Heart right ventricle (tissue), 16 donors: ENCODE measurements at regions of chr9 and their contacts with region 1.

Region 1: GRCh38 chr9:86637515-86637914 is 283.3 kb upstream of the TUT7 start:
- DNase-seq: peak; percentile 26 to 40
- ATAC-seq: peak in 3 of 8 donors; percentile 25 to 75 (median 51)
- H3K4me3 ChIP-seq: no peak overlapping the region
- H3K27ac ChIP-seq: no peak overlapping the region
- H3K4me1 ChIP-seq: peaks cover 0 to 2% (median 0%) of the 10 kb centered on the region in 9 donors
- H3K27me3 ChIP-seq: peaks cover 0 to 13% (median 4%) of the 10 kb centered on the region in 7 donors
- CTCF ChIP-seq: peak; percentile 16 to 63 (median 50)

Region 2: DNA sequence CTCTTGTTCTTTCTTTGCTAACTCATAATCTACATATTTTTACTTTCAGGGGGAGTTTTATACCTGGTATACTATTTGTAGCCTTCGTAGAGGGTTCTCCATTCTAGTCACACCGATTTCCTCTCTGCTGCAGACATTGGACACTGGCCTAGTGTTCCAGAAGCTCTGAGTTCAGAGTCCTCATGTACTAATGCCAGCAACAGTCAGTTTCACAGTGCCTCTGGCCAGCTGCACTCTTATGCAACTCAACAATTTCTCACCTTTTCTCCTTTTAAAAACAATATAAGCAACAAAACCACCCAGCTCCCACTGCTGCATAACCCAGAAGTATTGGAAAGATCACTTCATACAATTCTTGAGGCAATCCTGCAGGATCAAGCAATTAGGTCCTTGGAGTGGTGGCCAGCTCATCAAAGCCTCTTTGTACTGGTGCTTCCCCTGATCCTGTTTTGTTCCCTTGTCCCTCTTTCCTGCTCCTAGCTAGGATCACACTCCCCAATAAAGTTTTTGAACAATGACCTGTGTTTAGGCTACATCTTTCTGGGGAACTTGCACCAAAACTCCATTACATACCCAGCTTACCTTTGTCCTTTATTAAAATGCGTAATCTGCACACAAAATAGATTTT is 185.2 kb before region 1 on chr9:
- intact Hi-C with region 1: no loop called
- DNase-seq: no peak
- ATAC-seq: peak in 1 of 8 donors; percentile 41
- H3K4me3 ChIP-seq: no peak overlapping the region
- H3K27ac ChIP-seq: no peak overlapping the region
- H3K4me1 ChIP-seq: no peaks in the 10 kb centered on the region
- H3K27me3 ChIP-seq: no peaks in the 10 kb centered on the region
- CTCF ChIP-seq: no peak

Region 3: DNA sequence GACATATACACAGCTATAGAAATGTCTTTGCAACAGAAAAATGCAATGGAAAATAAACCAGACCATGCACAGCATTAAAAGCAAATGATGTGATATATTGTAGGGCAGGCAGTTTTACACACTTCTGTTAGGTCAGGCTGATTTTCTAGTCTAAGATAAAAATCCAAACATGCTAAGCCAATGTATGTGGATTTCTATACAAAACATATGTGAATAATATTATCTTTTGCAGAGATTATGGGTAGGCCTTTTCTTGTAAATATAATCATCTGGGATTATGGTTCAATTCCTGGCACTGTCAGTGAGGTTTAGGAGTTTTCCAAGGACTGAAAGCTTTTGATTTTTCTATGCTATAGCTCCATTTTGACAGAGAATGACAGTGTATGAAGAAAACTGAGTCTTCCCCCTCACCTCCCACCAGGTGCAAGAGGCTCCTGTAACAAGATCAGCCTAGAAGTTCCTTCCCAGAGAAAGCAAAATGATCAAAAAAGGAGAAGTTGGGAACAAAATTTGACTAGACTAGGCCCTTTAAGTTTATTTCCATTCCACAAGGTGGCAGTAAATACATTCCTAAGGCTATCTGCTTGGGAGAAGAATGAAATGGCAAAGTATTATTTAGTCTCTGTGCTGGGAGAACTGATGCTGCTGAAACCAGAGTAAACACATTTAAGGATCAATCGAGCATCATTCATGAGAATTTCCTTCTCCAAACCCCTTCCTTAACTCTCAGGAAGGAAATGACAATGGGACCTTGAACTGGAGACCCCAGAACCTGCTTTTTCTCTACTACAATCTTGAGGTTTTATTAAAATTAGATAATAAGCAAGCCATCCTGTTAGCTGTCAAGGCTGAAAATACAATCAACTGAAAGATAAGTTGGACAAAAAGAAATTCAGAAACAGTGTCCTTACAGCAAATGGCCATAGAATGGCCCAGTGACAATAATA is 150.4 kb before region 1 on chr9:
- intact Hi-C with region 1: loop called in 1 of 10 experiments (anchors 10 kb)
- DNase-seq: no peak
- ATAC-seq: peak in 7 of 8 donors; percentile 55 to 80 (median 73)
- H3K4me3 ChIP-seq: no peak overlapping the region
- H3K27ac ChIP-seq: no peak overlapping the region
- H3K4me1 ChIP-seq: peaks cover 0 to 6% (median 0%) of the 10 kb centered on the region in 9 donors
- H3K27me3 ChIP-seq: peaks cover 0 to 4% (median 0%) of the 10 kb centered on the region in 7 donors
- CTCF ChIP-seq: peak; percentile 44 to 79 (median 69)

Region 4: GRCh38 chr9:86687788-86688187 is 50.3 kb after region 1 on chr9:
- intact Hi-C with region 1: no loop called
- DNase-seq: no peak
- ATAC-seq: no peak
- H3K4me3 ChIP-seq: no peak overlapping the region
- H3K27ac ChIP-seq: no peak overlapping the region
- H3K4me1 ChIP-seq: no peaks in the 10 kb centered on the region
- H3K27me3 ChIP-seq: peaks cover 0 to 9% (median 0%) of the 10 kb centered on the region in 7 donors
- CTCF ChIP-seq: no peak

Region 5: GRCh38 chr9:86867804-86868313 is 230.3 kb after region 1 on chr9:
- intact Hi-C with region 1: loop called in 1 of 10 experiments (anchors 10 kb)
- DNase-seq: no peak
- ATAC-seq: no peak
- H3K4me3 ChIP-seq: no peak overlapping the region
- H3K27ac ChIP-seq: no peak overlapping the region
- H3K4me1 ChIP-seq: no peaks in the 10 kb centered on the region
- H3K27me3 ChIP-seq: peaks cover 0 to 7% (median 0%) of the 10 kb centered on the region in 7 donors
- CTCF ChIP-seq: no peak